ENCODE measurements at regions of chr16 and their contacts with region 1.

Region 1: DNA sequence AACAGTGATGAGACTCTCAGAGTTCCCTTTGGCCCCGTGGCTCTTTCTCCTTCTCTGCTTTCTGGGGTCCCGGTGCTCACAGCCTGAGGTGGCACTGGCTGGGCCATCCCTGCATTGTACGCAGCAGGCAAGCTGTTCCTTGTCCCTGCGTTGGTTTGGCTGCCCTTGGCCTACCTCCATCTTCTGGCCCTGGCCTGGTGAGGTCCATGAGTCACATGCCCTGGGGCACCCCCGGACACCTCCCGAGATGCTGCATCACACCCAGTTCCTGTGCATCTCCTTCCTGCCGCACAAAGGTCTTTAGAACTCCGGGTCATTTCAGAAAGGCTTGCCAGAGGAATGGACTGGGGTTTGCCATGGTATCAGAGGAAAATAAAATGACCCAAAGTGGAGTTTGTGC is 9.5 kb downstream of the SULT1A2 start:
- DNase-seq: no peak
- H3K4me3 ChIP-seq: no peak overlapping the region
- H3K27ac ChIP-seq: no peak overlapping the region
- H3K4me1 ChIP-seq: no peaks in the 10 kb centered on the region
- H3K27me3 ChIP-seq: no peaks in the 10 kb centered on the region
- CTCF ChIP-seq: no peak
- POLR2A ChIP-seq: no peak

Region 2: GRCh38 chr16:28304214-28304613 is 283.2 kb before region 1 on chr16:
- intact Hi-C with region 1: loop called (anchors 10 kb)
- DNase-seq: no peak
- H3K4me3 ChIP-seq: no peak overlapping the region
- H3K27ac ChIP-seq: no peak overlapping the region
- H3K4me1 ChIP-seq: no peaks in the 10 kb centered on the region
- H3K27me3 ChIP-seq: no peaks in the 10 kb centered on the region
- CTCF ChIP-seq: no peak
- POLR2A ChIP-seq: no peak